A549 (cell line): ENCODE measurements at regions of chr5 and their contacts with region 1.

Region 1: GRCh38 chr5:107557051-107557658 is 113.6 kb downstream of the EFNA5 start:
- DNase-seq: peak; percentile 59 to 73
- ATAC-seq: peak; percentile 80 to 82
- H3K4me3 ChIP-seq: no peak overlapping the region
- H3K27ac ChIP-seq: peak overlapping the region; percentile 6 to 70; a peak in 5 of 6 replicates
- H3K4me1 ChIP-seq: peaks cover 74% of the 10 kb centered on the region
- CTCF ChIP-seq: no peak
- EP300 ChIP-seq: no peak
- POLR2A ChIP-seq: no peak
- RAD21 ChIP-seq: peak in 1 of 2 experiments; percentile 16; a peak in 2 of 5 replicates

Region 2: DNA sequence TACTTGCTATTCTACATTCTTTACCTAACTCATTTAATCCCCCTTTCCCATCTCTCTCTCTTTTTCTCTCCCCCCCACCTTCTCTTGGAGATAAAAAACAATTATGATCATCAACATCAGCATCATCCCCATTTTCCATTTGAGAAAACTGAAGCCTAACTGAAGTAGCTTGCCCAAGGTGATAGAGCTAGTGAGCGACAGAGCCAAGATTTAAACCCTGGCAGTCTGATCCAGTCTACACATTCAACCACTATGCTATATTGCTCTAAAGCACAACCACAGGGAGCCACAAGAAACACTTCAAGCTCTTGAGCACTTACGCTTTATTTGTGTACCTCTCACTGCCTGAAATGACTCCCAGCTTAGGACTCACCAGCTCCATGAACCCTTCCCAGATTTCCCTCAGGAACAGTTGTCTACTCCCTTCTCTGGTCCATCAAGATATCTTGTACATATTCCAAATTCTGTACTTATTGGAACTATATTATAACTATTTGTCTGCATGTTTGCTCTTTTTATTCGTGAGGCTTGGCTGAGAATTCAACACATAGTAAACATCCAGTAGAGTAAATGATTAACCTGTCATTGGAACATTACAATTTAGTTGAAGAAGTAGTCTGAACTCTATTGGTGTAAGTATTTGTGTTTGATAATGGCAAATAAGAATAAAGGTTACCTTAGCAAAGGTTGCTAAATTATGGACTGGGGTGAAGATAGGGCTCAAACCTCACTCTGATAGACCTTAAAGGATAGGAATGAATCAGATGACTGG is 51.2 kb before region 1 on chr5:
- CTCF ChIA-PET with region 1: no interaction called
- POLR2A ChIA-PET with region 1: interaction called, 13 read pairs
- DNase-seq: peak in 1 of 2 experiments; percentile 33
- ATAC-seq: peak; percentile 47 to 84; a peak in 4 of 6 replicates
- H3K4me3 ChIP-seq: no peak overlapping the region
- H3K27ac ChIP-seq: peak overlapping the region; percentile 49 to 56
- H3K4me1 ChIP-seq: peaks cover 65% of the 10 kb centered on the region
- CTCF ChIP-seq: no peak; the same call in 2 of the 3 replicates
- EP300 ChIP-seq: no peak
- POLR2A ChIP-seq: no peak
- RAD21 ChIP-seq: no peak

Region 3: GRCh38 chr5:107676702-107677101 is 119.5 kb after region 1 on chr5:
- CTCF ChIA-PET with region 1: no interaction called
- POLR2A ChIA-PET with region 1: no interaction called
- DNase-seq: no peak
- ATAC-seq: no peak
- H3K4me3 ChIP-seq: no peak overlapping the region
- H3K27ac ChIP-seq: no peak overlapping the region
- H3K4me1 ChIP-seq: peaks cover 11% of the 10 kb centered on the region
- CTCF ChIP-seq: no peak
- EP300 ChIP-seq: no peak
- POLR2A ChIP-seq: no peak
- RAD21 ChIP-seq: no peak